Transverse colon (tissue), 4 donors: ENCODE measurements at regions of chr3 and their contacts with region 1.

Region 1: GRCh38 chr3:160343132-160343531 is 55.9 kb downstream of the IFT80 start:
- DNase-seq: no peak
- H3K4me3 ChIP-seq: no peak overlapping the region
- H3K27ac ChIP-seq: no peak overlapping the region
- H3K4me1 ChIP-seq: no peaks in the 10 kb centered on the region
- H3K27me3 ChIP-seq: no peaks in the 10 kb centered on the region
- CTCF ChIP-seq: peak; percentile 28 to 48 (median 41)
- EP300 ChIP-seq: no peak
- POLR2A ChIP-seq: no peak

Region 2: GRCh38 chr3:160163229-160163878 is 179.8 kb before region 1 on chr3:
- in situ Hi-C with region 1: loop called in 3 of 4 experiments (anchors 10 to 25 kb)
- intact Hi-C with region 1: no loop called
- DNase-seq: no peak
- H3K4me3 ChIP-seq: no peak overlapping the region
- H3K27ac ChIP-seq: no peak overlapping the region
- H3K4me1 ChIP-seq: peaks cover 0 to 5% (median 1%) of the 10 kb centered on the region in 4 donors
- H3K27me3 ChIP-seq: no peaks in the 10 kb centered on the region
- CTCF ChIP-seq: peak; percentile 40 to 61 (median 45)
- EP300 ChIP-seq: no peak
- POLR2A ChIP-seq: no peak

Region 3: DNA sequence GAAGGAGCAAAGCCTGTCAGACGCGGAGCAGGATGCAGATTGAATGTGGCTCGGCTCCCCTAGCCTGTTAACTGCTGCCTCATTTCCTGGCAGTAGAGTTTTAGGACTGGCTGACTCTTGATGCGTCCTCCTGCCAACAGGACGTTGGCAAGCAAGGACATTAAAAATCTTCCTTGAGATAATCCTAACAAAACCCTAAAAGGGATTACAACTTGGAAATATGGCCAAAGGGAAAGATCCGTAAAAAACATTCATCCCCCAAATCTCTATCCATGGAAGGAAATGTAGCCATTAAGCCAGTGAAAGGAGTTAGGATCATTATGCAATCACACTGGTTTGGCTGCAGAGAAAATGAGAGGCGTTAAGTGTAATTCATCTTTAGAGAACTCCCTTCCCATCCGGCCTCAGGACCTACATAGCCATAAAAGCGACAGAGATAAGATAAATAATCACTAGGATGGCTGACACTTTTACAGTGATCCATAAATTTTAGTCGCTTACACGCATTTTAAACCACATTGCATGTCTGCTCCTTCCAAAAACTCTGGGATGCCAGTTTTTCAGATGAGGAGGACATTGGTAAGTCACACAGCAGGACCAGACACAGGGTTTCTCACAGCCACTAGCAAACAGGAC is 162.4 kb before region 1 on chr3:
- in situ Hi-C with region 1: no loop called
- intact Hi-C with region 1: no loop called
- DNase-seq: no peak
- H3K4me3 ChIP-seq: no peak overlapping the region
- H3K27ac ChIP-seq: peak overlapping the region; percentile 44 to 76 (median 64)
- H3K4me1 ChIP-seq: peaks cover 0 to 30% (median 6%) of the 10 kb centered on the region in 4 donors
- H3K27me3 ChIP-seq: no peaks in the 10 kb centered on the region
- CTCF ChIP-seq: no peak
- EP300 ChIP-seq: peak; percentile 79
- POLR2A ChIP-seq: no peak

Region 4: DNA sequence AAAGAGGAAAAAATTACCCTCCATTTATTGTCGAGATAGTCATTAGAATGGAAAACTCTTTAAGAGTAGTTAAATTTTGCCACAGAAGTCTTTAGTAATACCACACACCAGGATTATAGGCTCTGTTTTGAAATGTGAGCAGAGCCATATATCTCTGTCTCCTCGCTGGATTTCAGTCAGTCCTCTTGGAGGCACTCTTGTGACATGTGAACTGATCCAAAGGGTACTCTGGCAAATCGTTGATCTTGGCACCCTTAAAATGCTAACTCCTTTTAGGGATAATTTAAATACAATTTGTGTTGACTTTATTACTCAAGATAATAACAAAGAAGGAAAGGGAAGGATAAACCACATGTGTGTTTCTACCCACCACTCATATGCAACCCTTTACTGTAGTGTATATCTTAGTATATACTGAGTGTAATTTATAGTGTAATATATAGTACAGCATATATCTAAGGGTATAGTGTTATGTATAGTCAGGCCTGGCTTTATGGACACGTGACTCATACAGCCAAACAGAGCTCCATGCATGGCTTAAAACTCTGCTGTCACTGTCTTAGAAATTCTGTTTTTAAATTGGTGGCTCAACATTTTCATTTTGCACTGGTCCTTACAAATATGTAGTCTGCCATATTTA is 234.5 kb after region 1 on chr3:
- in situ Hi-C with region 1: no loop called
- intact Hi-C with region 1: no loop called
- DNase-seq: no peak
- H3K4me3 ChIP-seq: no peak overlapping the region
- H3K27ac ChIP-seq: no peak overlapping the region
- H3K4me1 ChIP-seq: no peaks in the 10 kb centered on the region
- H3K27me3 ChIP-seq: no peaks in the 10 kb centered on the region
- CTCF ChIP-seq: no peak
- EP300 ChIP-seq: no peak
- POLR2A ChIP-seq: no peak